Mucosa of descending colon (tissue), 3 donors: ENCODE measurements at regions of chr14 and their contacts with region 1.

Region 1: GRCh38 chr14:55160989-55161388 is 30.4 kb downstream of the DLGAP5 start:
- DNase-seq: no peak
- ATAC-seq: peak; percentile 76
- H3K4me3 ChIP-seq: no peak overlapping the region
- H3K4me1 ChIP-seq: no peaks in the 10 kb centered on the region
- CTCF ChIP-seq: peak; percentile 16

Region 2: DNA sequence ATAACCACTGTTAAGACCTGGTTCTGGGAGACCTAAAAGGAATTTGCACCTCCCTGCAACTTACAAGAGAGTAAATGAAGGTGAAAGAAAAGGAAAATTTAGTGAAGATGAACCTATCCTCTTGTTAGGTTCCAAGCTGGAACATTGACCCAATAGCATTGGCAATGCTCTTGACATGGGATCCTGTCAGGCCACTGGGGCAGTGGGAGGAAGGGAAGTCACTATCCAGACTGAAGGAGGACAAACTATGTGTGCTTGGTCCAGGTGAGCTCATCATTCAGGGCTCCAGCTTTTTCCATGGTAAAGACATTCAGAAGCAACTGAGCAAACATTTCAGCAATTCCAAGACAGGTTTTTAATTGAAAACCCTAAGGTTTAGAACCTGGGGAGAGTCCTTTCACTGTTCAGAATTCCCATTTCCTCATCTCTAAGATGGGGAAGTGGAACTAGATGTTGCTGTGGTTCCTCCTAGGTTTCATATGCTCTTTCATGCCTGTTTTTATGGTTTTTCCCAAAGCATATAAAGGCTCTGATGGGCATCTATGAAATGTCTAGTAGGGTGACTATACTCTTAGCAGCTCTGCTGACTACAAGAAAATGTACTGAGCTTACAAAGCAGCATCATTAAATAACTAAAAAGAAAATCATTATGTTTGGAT is 76.5 kb before region 1 on chr14:
- intact Hi-C with region 1: loop called in 1 of 2 experiments (anchors 5 kb)
- DNase-seq: no peak
- ATAC-seq: no peak
- H3K4me3 ChIP-seq: no peak overlapping the region
- H3K4me1 ChIP-seq: no peaks in the 10 kb centered on the region
- CTCF ChIP-seq: no peak